ENCODE measurements at regions of chr9 and their contacts with region 1.

Region 1: GRCh38 chr9:96566498-96567207 is 53.0 kb downstream of the CDC14B start:
- DNase-seq: peak; percentile 93

Region 2: DNA sequence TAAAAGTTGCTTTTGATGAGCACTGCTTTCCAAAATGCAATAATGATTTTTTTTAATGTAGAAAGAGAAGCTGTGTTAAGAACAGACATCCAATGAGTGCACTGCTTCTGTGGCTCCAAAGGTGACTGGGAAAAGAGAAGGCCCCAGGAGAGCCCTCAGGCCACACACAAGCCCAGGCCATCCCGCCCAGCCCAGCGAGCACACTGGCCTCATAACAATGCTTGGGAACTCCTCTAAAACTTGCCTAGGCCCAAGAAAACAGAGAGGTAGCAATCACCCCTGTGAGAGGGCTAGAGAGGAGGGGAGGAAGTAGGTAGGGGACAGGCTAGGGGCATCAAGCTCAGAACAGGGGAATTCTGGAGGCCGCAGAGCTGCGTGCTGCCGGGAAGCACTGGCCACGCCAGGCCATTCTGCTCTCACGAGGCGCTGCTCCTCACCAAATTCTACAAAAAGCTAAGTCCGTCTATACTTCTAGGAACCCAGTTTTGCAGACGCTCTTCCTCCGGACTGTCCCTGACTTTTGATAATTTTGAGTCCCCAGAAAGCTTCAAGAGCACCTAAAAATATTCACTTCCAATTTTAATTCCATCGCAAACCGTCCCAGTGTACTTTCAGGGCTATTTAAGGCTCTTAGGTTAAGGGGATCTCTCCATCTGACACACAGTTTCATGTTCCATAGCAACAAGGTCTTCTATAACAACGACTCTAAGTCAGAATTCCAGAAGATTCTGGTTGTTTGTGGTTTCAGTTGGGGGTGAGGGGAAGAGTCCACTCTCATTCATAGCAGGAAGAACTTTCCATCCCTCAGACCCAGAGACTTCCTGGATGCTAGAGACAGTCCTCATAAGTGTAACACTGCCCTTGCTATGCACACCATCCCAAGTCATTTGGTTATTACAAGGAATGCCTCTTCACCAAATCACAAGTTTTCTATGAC is 65.7 kb before region 1 on chr9:
- intact Hi-C with region 1: loop called in 1 of 2 experiments (anchors 10 kb)
- DNase-seq: no peak

Region 3: GRCh38 chr9:96603305-96604003 is 36.8 kb after region 1 on chr9:
- intact Hi-C with region 1: loop called in 1 of 2 experiments (anchors 2 kb)
- DNase-seq: no peak

Measured in posterior vena cava (tissue), 2 donors.